ENCODE measurements at regions of chr1 and their contacts with region 1.

Region 1: GRCh38 chr1:88983791-88984559 is 8.5 kb downstream of the KYAT3 start:
- DNase-seq: peak; percentile 63 to 73 (median 69)
- H3K4me3 ChIP-seq: no peak overlapping the region
- H3K4me3 Mint-ChIP-seq: peak overlapping the region; percentile 8 to 85 (median 64)
- H3K27ac ChIP-seq: peak overlapping the region; percentile 27
- H3K27ac Mint-ChIP-seq: peak overlapping the region; percentile 17 to 90 (median 85)
- H3K4me1 ChIP-seq: peaks cover 54% of the 10 kb centered on the region
- H3K4me1 Mint-ChIP-seq: peaks cover 43 to 82% (median 60%) of the 10 kb centered on the region in 4 donors
- H3K27me3 ChIP-seq: no peaks in the 10 kb centered on the region
- H3K27me3 Mint-ChIP-seq: no peaks in the 10 kb centered on the region

Region 2: DNA sequence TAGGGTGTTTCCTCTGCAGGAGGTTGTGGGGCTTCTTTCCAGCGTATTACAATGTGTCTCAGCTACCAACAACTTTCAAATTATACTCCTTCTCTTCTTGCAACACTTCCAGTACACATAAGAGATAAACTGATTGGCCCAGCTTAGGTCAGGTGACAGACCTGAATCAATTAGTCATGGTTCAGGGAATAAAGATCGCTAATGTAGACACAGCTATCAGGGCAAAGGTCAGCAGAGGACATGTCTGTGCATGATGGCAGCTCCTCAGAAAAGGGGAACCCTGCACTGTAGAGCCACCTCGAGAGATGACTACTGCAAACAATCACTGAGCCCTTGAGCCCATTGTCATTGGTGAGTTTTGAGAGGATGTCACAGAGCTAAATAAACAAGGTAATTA is 336.7 kb before region 1 on chr1:
- CTCF ChIA-PET with region 1: no interaction called
- POLR2A ChIA-PET with region 1: no interaction called
- intact Hi-C with region 1: no loop called
- DNase-seq: no peak
- H3K4me3 ChIP-seq: no peak overlapping the region
- H3K4me3 Mint-ChIP-seq: no peak overlapping the region
- H3K27ac ChIP-seq: no peak overlapping the region
- H3K27ac Mint-ChIP-seq: no peak overlapping the region
- H3K4me1 ChIP-seq: no peaks in the 10 kb centered on the region
- H3K4me1 Mint-ChIP-seq: no peaks in the 10 kb centered on the region
- H3K27me3 ChIP-seq: no peaks in the 10 kb centered on the region
- H3K27me3 Mint-ChIP-seq: peaks cover 6 to 7% of the 10 kb centered on the region in 2 donors

Region 3: DNA sequence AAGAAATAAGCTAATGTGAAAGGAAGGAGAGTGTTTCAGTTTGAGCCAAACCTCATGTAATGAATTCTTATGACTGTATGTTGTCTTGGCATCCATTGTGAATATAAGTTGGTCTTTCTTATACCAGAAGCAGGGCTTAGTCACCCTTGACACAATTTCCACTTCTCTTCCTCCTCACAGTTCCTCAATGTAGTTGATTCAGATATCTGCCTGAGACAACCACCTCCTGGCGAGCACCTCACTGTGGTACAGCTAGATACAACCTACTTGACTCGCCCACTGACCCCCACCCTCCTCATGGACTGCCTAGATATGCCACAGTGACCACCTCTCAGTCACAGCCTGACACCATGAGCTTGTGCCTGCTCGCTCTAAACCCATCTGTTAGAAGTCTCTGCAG is 37.1 kb before region 1 on chr1:
- CTCF ChIA-PET with region 1: interaction called, 11 read pairs
- POLR2A ChIA-PET with region 1: no interaction called
- intact Hi-C with region 1: no loop called
- DNase-seq: no peak
- H3K4me3 ChIP-seq: no peak overlapping the region
- H3K4me3 Mint-ChIP-seq: no peak overlapping the region
- H3K27ac ChIP-seq: no peak overlapping the region
- H3K27ac Mint-ChIP-seq: peak overlapping the region in 3 of 7 donors; percentile 6 to 38 (median 19)
- H3K4me1 ChIP-seq: no peaks in the 10 kb centered on the region
- H3K4me1 Mint-ChIP-seq: peaks cover 0 to 2% (median 0%) of the 10 kb centered on the region in 4 donors
- H3K27me3 ChIP-seq: no peaks in the 10 kb centered on the region
- H3K27me3 Mint-ChIP-seq: no peaks in the 10 kb centered on the region

Region 4: GRCh38 chr1:88998716-88999115 is 14.7 kb after region 1 on chr1:
- CTCF ChIA-PET with region 1: interaction called, 56 read pairs
- POLR2A ChIA-PET with region 1: interaction called, 4 read pairs
- intact Hi-C with region 1: loop called (anchors 1 kb)
- DNase-seq: peak; percentile 51 to 74 (median 71)
- H3K4me3 ChIP-seq: no peak overlapping the region
- H3K4me3 Mint-ChIP-seq: no peak overlapping the region
- H3K27ac ChIP-seq: no peak overlapping the region
- H3K27ac Mint-ChIP-seq: no peak overlapping the region
- H3K4me1 ChIP-seq: peaks cover 25% of the 10 kb centered on the region
- H3K4me1 Mint-ChIP-seq: peaks cover 20 to 40% (median 30%) of the 10 kb centered on the region in 4 donors
- H3K27me3 ChIP-seq: no peaks in the 10 kb centered on the region
- H3K27me3 Mint-ChIP-seq: no peaks in the 10 kb centered on the region

Region 5: DNA sequence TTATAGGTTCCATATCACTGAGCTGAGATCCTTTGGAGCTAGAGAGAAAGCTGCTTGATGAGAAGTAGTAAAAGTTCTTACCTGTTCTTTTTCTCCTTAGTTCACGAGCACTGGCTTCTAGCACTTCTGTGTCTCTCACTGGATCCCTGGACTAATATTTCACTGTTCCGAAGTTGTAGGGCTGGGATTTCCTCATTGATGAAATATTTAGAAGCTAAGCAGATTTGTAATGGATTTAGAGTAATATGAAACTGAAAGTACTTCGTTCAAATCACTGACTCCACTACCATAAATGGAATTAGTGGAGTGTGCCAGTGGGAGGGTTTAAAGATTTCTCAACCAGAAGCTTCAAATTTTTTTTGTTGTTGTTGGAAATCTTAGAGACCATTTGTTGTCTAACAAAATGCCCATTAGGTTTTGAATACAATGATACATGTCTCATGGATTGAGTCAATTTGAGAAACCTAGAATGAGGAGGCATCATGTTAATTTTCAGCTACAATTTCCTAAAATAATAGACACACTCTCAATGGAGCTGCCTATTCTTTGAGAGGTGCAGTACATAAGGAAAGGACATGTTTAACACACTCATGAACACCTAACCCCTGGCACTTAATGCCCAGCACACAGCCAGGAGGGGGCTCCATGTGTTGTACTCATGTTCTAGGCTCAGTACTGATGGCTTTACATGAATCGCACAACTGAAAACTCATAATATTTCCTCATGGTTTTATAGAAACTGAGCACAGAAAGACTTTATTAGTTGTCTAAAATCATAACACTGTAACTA is 81.3 kb after region 1 on chr1 and contains the start of gene GBP1:
- CTCF ChIA-PET with region 1: interaction called, 10 read pairs
- POLR2A ChIA-PET with region 1: no interaction called
- intact Hi-C with region 1: no loop called
- DNase-seq: peak; percentile 51 to 57 (median 53)
- H3K4me3 ChIP-seq: peak within 1 kb of the TSS; percentile 65 to 74
- H3K4me3 Mint-ChIP-seq: peak within 1 kb of the TSS; percentile 90 to 100 (median 98)
- H3K27ac ChIP-seq: peak within 1 kb of the TSS; percentile 85
- H3K27ac Mint-ChIP-seq: peak within 1 kb of the TSS; percentile 94 to 100 (median 96)
- H3K4me1 ChIP-seq: peaks cover 56% of the 10 kb centered on the region
- H3K4me1 Mint-ChIP-seq: peaks cover 37 to 70% (median 51%) of the 10 kb centered on the region in 4 donors
- H3K27me3 ChIP-seq: no peaks in the 10 kb centered on the region
- H3K27me3 Mint-ChIP-seq: no peaks in the 10 kb centered on the region
- total RNA-seq, gene GBP1: 74.1 to 74.2 TPM

Region 6: DNA sequence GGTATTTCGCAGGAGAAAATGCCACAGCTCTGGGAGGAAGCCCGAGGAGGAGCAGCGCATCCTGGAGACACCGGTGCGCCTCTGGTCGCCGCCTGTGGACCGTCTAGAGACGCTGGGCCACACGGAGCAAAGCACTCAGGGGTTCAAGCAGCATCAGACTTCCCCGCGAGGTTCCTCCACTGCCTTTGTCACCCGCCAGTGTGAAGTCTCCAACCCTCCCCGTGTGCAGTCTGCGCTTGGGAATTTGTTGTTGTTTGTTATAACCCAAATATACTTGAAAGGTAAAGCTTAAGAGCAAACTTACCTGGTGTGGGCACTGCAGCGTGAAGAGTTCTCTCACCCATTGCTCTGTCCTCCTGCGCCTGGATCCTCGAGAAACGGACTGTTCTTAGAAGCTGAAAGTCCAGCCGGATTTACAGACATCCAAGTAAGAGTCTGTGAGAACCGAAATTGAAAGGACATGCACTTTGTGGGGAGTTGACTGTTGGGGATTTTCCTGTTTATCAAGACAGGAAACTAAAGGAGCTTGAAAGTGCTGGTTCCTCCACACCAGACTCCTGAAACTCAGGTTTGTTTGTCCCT is 214.6 kb after region 1 on chr1 and contains the start of gene GBP4:
- CTCF ChIA-PET with region 1: interaction called, 15 read pairs
- POLR2A ChIA-PET with region 1: no interaction called
- intact Hi-C with region 1: no loop called
- DNase-seq: peak; percentile 36 to 58 (median 45)
- H3K4me3 ChIP-seq: peak within 1 kb of the TSS; percentile 80
- H3K4me3 Mint-ChIP-seq: peak within 1 kb of the TSS; percentile 96 to 99 (median 98)
- H3K27ac ChIP-seq: peak within 1 kb of the TSS; percentile 85
- H3K27ac Mint-ChIP-seq: peak within 1 kb of the TSS; percentile 94 to 99 (median 95)
- H3K4me1 ChIP-seq: peaks cover 60% of the 10 kb centered on the region
- H3K4me1 Mint-ChIP-seq: peaks cover 48 to 88% (median 63%) of the 10 kb centered on the region in 4 donors
- H3K27me3 ChIP-seq: no peaks in the 10 kb centered on the region
- H3K27me3 Mint-ChIP-seq: no peaks in the 10 kb centered on the region
- total RNA-seq, gene GBP4: 48.5 to 49.5 TPM

Region 7: GRCh38 chr1:89454845-89455521 is 471.0 kb after region 1 on chr1:
- CTCF ChIA-PET with region 1: interaction called, 65 read pairs
- POLR2A ChIA-PET with region 1: no interaction called
- intact Hi-C with region 1: loop called (anchors 1 kb)
- DNase-seq: peak; percentile 67 to 73 (median 69)
- H3K4me3 ChIP-seq: no peak overlapping the region
- H3K4me3 Mint-ChIP-seq: no peak overlapping the region
- H3K27ac ChIP-seq: no peak overlapping the region
- H3K27ac Mint-ChIP-seq: peak overlapping the region in 2 of 7 donors; percentile 48 to 68
- H3K4me1 ChIP-seq: peaks cover 11% of the 10 kb centered on the region
- H3K4me1 Mint-ChIP-seq: peaks cover 9 to 14% (median 12%) of the 10 kb centered on the region in 4 donors
- H3K27me3 ChIP-seq: no peaks in the 10 kb centered on the region
- H3K27me3 Mint-ChIP-seq: peaks cover 1 to 2% of the 10 kb centered on the region in 2 donors

Region 8: DNA sequence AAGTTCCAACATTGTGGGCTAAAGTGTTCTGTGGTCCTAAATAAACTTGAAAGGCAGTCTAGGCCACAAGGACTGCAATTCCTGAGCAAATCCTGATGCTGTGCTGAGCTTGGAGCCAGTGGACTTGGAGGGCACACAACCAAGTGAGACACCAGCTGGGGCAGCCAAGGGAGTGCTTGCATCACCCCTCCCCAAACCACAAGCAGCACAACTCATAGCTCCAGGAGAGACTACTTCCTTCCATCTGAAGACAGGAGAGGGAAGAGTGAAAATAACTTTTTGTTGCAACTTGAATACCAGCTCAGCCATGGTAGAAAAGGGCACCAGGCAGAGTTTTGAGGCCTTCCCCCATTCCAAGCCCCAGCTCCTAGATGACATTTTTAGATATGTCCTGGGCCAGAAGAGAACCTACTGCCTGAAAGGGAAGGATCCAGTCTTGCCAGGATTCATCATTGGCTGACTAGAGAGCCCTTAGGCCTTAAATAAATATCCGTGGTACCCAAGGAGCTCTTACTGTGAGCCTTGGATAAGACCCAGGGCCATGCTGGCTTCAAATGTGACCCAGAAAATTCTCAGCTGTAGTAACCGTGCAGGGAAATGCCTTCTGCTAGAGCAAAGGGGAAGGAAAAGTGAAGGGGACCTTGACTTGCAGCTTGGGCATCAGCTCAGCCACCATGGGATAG is 505.2 kb after region 1 on chr1:
- CTCF ChIA-PET with region 1: no interaction called
- POLR2A ChIA-PET with region 1: no interaction called
- intact Hi-C with region 1: no loop called
- DNase-seq: no peak
- H3K4me3 ChIP-seq: no peak overlapping the region
- H3K4me3 Mint-ChIP-seq: peak overlapping the region in 1 of 8 donors; percentile 41
- H3K27ac ChIP-seq: no peak overlapping the region
- H3K27ac Mint-ChIP-seq: no peak overlapping the region
- H3K4me1 ChIP-seq: no peaks in the 10 kb centered on the region
- H3K4me1 Mint-ChIP-seq: peaks cover 0 to 10% (median 9%) of the 10 kb centered on the region in 4 donors
- H3K27me3 ChIP-seq: no peaks in the 10 kb centered on the region
- H3K27me3 Mint-ChIP-seq: peaks cover 0 to 6% of the 10 kb centered on the region in 2 donors